ENCODE measurements at regions of chr11 and their contacts with region 1.

Region 1: GRCh38 chr11:44950625-44951476 is at the start of gene TP53I11:
- DNase-seq: peak; percentile 47
- H3K4me3 Mint-ChIP-seq: peak within 1 kb of the TSS; percentile 62
- H3K27ac Mint-ChIP-seq: no peak within 1 kb of the TSS
- H3K4me1 Mint-ChIP-seq: peaks cover 14% of the 10 kb centered on the region
- H3K27me3 Mint-ChIP-seq: peaks cover 25% of the 10 kb centered on the region
- total RNA-seq, gene TP53I11: 5.7 TPM in 2 replicates

Region 2: GRCh38 chr11:45079943-45080719 is 129.3 kb after region 1 on chr11:
- intact Hi-C with region 1: loop called (anchors 5 kb)
- DNase-seq: peak; percentile 44
- H3K4me3 Mint-ChIP-seq: no peak overlapping the region
- H3K27ac Mint-ChIP-seq: peak overlapping the region; percentile 81
- H3K4me1 Mint-ChIP-seq: peaks cover 37% of the 10 kb centered on the region
- H3K27me3 Mint-ChIP-seq: peaks cover 10% of the 10 kb centered on the region